ENCODE measurements at regions of chr18 and their contacts with region 1.

Region 1: GRCh38 chr18:24721388-24721787 is 261.0 kb downstream of the HRH4 start:
- DNase-seq: no peak
- ATAC-seq: peak; percentile 40; the same call in 1 of the 2 replicates
- H3K4me3 ChIP-seq: no peak overlapping the region
- H3K27ac ChIP-seq: peak overlapping the region; percentile 87; the same call in 1 of the 2 replicates
- H3K4me1 ChIP-seq: peaks cover 7% of the 10 kb centered on the region
- H3K27me3 ChIP-seq: no peaks in the 10 kb centered on the region
- CTCF ChIP-seq: no peak
- POLR2A ChIP-seq: no peak
- RAD21 ChIP-seq: no peak

Region 2: DNA sequence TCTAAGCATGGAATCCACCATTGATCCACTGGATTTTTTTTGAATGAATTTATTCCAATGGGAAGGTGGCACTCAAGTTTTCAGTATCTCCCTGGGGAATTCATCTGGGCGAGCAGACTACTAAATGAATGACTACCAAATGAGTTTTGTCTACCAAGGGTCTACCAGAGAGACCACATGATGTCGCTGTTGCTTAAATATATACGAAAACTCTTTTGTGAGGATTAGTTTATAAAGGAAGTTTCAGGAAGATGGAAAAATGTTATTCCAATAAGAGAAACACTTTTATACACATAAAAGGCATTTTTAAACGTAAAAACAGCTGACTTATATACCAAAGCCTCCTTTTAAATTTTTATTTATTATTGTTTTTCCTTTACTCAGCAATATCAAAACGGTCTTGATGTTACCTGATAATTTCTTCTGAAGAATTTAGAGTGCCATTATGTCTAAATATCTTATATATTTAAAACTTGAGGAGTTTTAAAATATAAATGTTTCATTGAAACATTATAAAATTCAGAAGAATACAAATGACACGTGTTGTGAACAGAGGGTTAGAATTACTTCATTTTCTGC is 121.2 kb before region 1 on chr18:
- CTCF ChIA-PET with region 1: interaction called, 16 read pairs
- POLR2A ChIA-PET with region 1: interaction called, 3 read pairs
- dilution Hi-C with region 1: no loop called
- in situ Hi-C with region 1: loop called (anchors 5 kb)
- intact Hi-C with region 1: loop called (anchors 1 kb)
- DNase-seq: peak; percentile 75
- ATAC-seq: peak; percentile 79
- H3K4me3 ChIP-seq: no peak overlapping the region
- H3K27ac ChIP-seq: no peak overlapping the region
- H3K4me1 ChIP-seq: peaks cover 2% of the 10 kb centered on the region; the same call in 1 of the 2 replicates
- H3K27me3 ChIP-seq: peaks cover 24% of the 10 kb centered on the region
- CTCF ChIP-seq: peak; percentile 83
- POLR2A ChIP-seq: no peak
- RAD21 ChIP-seq: peak; percentile 83

Region 3: GRCh38 chr18:24763765-24764513 is 42.6 kb after region 1 on chr18:
- CTCF ChIA-PET with region 1: no interaction called
- POLR2A ChIA-PET with region 1: no interaction called
- dilution Hi-C with region 1: no loop called
- in situ Hi-C with region 1: no loop called
- intact Hi-C with region 1: no loop called
- DNase-seq: peak; percentile 96
- ATAC-seq: peak; percentile 80
- H3K4me3 ChIP-seq: no peak overlapping the region
- H3K27ac ChIP-seq: peak overlapping the region; percentile 82
- H3K4me1 ChIP-seq: peaks cover 20% of the 10 kb centered on the region
- H3K27me3 ChIP-seq: no peaks in the 10 kb centered on the region
- CTCF ChIP-seq: no peak
- POLR2A ChIP-seq: no peak
- RAD21 ChIP-seq: no peak

Measured in IMR-90 (cell line).